ENCODE measurements at regions of chr7 and their contacts with region 1.

Region 1: GRCh38 chr7:2921653-2922347 is 77.7 kb upstream of the GNA12 start:
- DNase-seq: peak in 1 of 2 experiments; percentile 80
- H3K4me3 ChIP-seq: no peak overlapping the region
- H3K27ac ChIP-seq: no peak overlapping the region
- H3K4me1 ChIP-seq: no peaks in the 10 kb centered on the region; a peak in 1 of 7 replicates
- H3K27me3 ChIP-seq: no peaks in the 10 kb centered on the region; a peak in 1 of 7 replicates
- CTCF ChIP-seq: peak; percentile 80 to 84 (median 81)
- EP300 ChIP-seq: no peak
- POLR2A ChIP-seq: no peak
- RAD21 ChIP-seq: peak; percentile 59 to 77

Region 2: DNA sequence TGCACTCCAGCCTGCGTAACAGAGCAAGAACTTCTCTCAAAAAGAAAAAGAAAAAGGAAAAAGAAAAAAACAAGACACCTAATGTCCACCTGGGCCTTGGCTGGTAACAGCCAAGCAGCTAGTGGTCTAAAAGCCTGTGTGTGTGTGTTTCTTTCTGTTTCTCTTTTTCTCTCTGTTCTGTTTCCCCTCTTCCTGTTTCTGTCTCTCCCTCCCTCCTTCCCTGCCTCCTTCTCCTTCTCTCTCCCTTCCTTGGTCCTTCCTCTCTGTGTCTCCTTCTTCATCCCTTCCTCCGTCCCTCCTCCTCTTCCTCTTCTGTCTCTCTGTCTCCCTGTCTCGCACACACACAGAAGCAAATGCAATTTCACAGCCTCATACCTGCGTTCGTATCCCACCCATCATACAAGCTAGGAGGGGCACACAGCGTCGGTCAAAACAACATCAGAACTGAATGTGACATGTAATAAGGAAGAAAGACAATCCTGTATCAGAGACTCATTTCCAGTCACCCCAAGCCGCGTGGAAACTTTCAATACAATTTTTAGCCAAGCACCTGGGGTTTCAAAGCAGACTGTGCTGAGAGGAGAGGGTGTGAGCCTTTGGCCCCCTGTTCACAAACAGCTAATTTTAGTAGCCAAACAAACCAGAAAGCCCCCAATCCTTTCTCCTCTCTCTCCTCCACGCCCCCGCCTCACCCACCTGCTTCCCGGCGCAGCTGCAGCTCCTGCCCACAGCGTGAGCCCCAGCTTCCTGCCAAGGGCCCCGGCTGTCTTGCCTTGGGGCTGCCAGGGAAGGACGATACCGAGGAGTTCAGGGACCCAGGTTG is 27.5 kb before region 1 on chr7:
- CTCF ChIA-PET with region 1: interaction called, 16 read pairs
- POLR2A ChIA-PET with region 1: no interaction called
- DNase-seq: no peak
- H3K4me3 ChIP-seq: no peak overlapping the region
- H3K27ac ChIP-seq: no peak overlapping the region
- H3K4me1 ChIP-seq: no peaks in the 10 kb centered on the region; a peak in 1 of 7 replicates
- H3K27me3 ChIP-seq: no peaks in the 10 kb centered on the region
- CTCF ChIP-seq: no peak
- EP300 ChIP-seq: no peak
- POLR2A ChIP-seq: no peak
- RAD21 ChIP-seq: no peak

Region 3: DNA sequence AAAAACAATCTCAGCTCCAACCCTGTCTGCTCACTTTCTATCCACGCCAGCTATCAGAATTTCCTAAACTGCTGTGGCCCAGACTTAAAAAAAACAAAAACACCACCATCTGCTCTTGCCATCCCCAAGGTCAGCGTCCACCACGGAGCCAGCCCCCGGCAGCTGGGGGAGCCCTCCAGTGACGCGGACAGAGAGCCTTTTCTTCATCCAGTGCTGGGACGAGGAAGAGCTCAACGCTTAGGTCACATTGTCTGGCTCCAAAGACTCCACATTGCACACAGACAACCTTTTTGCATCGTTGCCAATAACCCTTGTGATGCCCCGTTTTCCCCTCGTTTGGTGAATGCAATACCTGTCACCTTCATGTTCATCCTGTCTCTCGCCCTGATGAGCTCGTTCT is 10.3 kb before region 1 on chr7:
- CTCF ChIA-PET with region 1: interaction called, 29 read pairs
- POLR2A ChIA-PET with region 1: interaction called, 3 read pairs
- DNase-seq: no peak
- H3K4me3 ChIP-seq: no peak overlapping the region
- H3K27ac ChIP-seq: no peak overlapping the region
- H3K4me1 ChIP-seq: no peaks in the 10 kb centered on the region
- H3K27me3 ChIP-seq: no peaks in the 10 kb centered on the region
- CTCF ChIP-seq: no peak
- EP300 ChIP-seq: no peak
- POLR2A ChIP-seq: no peak
- RAD21 ChIP-seq: no peak

Region 4: GRCh38 chr7:2943851-2944601 is 22.2 kb after region 1 on chr7:
- CTCF ChIA-PET with region 1: interaction called, 14 read pairs
- POLR2A ChIA-PET with region 1: no interaction called
- DNase-seq: no peak
- H3K4me3 ChIP-seq: no peak overlapping the region
- H3K27ac ChIP-seq: no peak overlapping the region
- H3K4me1 ChIP-seq: no peaks in the 10 kb centered on the region
- H3K27me3 ChIP-seq: peaks cover 0 to 2% (median 0%) of the 10 kb centered on the region in 4 experiments; a peak in 1 of 7 replicates
- CTCF ChIP-seq: no peak
- EP300 ChIP-seq: no peak
- POLR2A ChIP-seq: no peak
- RAD21 ChIP-seq: no peak

Region 5: GRCh38 chr7:3065724-3066143 is 143.9 kb after region 1 on chr7:
- CTCF ChIA-PET with region 1: interaction called, 17 read pairs
- POLR2A ChIA-PET with region 1: no interaction called
- DNase-seq: peak; percentile 51 to 89
- H3K4me3 ChIP-seq: no peak overlapping the region
- H3K27ac ChIP-seq: no peak overlapping the region
- H3K4me1 ChIP-seq: peaks cover 0 to 4% (median 0%) of the 10 kb centered on the region in 4 experiments; a peak in 2 of 7 replicates
- H3K27me3 ChIP-seq: no peaks in the 10 kb centered on the region
- CTCF ChIP-seq: peak; percentile 78 to 95 (median 84)
- EP300 ChIP-seq: no peak
- POLR2A ChIP-seq: no peak
- RAD21 ChIP-seq: peak; percentile 69 to 79

Measured in H1 (cell line).